AG04449 (cell line): ENCODE measurements at regions of chr11 and their contacts with region 1.

Region 1: GRCh38 chr11:47854667-47855066 is 6.5 kb upstream of the NUP160 start:
- DNase-seq: no peak
- H3K4me3 ChIP-seq: no peak overlapping the region
- CTCF ChIP-seq: no peak

Region 2: DNA sequence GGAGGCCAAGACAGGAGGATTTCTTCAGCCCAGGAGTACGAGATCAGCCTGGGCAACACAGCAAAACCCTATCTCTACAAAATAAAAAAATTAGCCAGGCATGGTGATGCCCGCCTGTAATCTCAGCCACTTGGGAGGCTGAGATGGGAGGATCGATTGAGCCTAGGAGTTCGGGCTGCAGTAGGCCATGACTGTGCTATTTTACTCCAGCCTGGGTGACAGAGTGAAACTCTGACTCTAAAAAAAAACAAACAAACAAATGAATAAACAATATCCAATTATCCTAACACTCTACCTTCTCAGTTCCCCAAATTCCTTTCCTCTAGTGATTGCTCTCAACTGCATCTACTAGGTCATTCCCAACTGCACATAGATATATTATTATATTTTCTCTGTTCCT is 11.9 kb before region 1 on chr11:
- CTCF ChIA-PET with region 1: interaction called, 13 read pairs
- POLR2A ChIA-PET with region 1: no interaction called
- DNase-seq: no peak
- H3K4me3 ChIP-seq: no peak overlapping the region
- CTCF ChIP-seq: no peak